Left cardiac atrium (tissue), 4 donors: ENCODE measurements at regions of chr4 and their contacts with region 1.

Region 1: DNA sequence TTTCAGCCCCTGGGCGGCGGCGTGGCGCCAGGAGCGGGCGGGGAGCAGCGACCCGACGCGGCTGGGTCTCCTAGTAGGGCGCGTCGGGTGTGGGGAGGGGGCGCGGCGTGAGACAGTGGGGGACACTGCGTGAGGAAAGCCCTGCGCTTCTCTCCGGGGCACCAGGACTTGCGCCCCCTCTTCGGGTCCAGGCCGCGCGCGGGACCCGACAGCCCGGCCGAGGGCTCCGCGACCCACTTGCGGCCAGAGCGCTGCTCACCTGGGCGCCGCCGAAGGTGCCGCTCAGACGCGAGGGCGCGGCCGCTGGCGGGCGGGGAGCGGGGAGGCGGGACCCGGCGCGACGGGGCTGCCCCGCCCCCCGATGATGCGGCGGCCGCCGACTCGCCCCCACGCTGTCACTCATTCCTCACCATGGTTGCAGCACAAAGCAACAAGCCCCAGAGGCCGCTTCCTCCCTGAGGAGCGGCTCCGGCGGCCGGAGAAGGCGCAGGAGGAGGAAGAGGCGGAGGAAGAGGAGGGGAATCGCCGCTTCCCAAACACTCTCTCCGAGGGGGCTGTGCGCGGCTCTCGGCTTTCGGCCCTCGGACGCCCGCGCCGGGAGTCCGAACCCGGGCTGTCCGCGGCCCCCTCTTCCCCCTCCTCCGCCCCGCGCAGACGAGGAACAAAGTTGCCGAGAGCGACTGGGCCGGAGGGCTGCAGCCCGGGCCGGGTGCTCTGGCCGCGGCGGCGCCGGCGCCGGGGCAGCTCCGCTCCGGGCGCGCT is at the start of gene RAPGEF2:
- DNase-seq: peak; percentile 94
- ATAC-seq: peak; percentile 95 to 97
- total RNA-seq, gene RAPGEF2: 28.0 to 38.0 TPM

Region 2: GRCh38 chr4:158856852-158857251 is 246.0 kb before region 1 on chr4:
- intact Hi-C with region 1: loop called in 1 of 2 experiments (anchors 5 kb)
- DNase-seq: no peak
- ATAC-seq: peak; percentile 69 to 70

Region 3: DNA sequence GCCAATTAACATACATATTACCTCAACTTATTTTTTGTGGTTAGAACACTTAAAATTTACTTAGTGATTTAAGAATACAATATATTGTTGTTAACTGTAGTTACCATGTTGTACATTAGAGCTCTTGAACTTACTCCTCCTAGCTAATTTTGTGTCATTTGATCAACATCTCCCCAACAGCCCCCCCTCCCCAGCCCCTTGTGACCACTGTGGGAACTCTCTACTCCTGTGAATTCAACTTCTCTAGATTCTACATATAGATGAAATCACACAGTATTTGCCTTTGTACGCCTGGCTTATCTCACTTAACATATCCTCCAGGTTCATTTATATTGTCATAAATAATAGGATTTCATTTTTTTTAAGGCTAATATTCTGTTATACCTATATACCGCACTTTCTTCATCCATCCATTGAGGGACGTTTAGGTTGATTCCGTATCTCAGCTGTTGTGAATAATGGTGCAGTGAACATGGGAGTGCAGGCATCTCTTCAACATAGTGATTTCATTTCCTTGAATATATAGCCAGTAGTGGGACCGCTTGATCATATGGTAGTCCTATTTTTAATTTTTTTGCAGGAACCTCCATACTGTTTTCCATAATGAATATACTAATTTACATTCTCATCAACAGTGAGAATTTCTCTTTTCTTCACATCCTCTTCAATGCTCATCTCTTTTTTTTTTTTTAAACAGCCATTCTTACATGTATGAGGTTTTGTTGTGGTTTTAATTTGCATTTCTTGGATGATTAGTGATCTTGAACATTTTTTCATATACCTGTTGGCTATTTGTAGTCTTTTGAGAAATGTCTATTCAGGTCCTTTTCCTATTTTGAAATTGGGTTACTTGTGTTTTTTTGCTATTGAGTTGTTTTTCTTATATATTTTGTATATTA is 66.8 kb after region 1 on chr4:
- intact Hi-C with region 1: loop called in 1 of 2 experiments (anchors 5 kb)
- DNase-seq: no peak
- ATAC-seq: no peak